Activated naive CD8-positive, alpha-beta T cell treated with anti-CD3 and anti-CD28 coated beads, Interleukin-2, amount 10 ng/mL, durations not matched to agents 7 days and 5 days (primary cell): ENCODE measurements at regions of chr20 and their contacts with region 1.

Region 1: DNA sequence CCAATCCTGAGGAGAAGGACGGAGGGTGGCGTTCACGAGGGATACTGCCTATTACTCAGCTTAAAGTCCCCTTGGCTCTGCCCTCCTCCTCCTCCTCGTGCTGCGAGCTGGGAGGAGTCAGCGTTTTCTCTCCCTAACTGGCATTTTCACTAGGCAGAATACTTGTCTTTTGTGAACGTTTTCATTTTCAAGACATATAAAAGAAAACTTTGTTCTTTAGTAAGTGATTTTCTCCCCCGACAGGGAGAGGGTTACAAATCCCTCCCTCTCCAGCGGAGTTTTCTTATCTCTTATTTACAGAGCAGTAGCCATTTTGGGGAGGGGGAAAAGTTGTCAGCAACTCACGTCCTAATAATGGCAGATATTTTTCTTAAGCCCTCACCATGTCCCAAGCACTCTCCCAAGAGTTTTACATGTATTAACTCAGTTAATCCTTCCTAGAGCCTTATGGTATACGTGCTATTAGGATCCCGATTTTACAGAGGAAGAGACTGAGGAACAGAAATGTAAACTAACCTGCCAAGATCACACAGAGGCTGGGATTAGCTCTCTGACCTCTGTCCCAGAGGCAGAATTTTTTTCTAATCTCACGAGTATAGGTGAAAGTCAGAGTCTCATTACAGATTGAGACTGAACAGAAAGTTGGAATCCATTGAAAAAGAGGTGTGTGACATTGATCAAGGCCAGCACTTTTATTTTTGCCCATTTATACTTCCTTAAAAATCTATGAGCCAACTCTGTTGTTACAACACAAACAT is 30.0 kb upstream of the ZNF217 start:
- DNase-seq: no peak
- ATAC-seq: peak; percentile 55
- H3K4me3 Mint-ChIP-seq: peak overlapping the region; percentile 80
- H3K27ac Mint-ChIP-seq: peak overlapping the region; percentile 98
- H3K4me1 Mint-ChIP-seq: peaks cover 41% of the 10 kb centered on the region
- H3K27me3 Mint-ChIP-seq: no peaks in the 10 kb centered on the region

Region 2: DNA sequence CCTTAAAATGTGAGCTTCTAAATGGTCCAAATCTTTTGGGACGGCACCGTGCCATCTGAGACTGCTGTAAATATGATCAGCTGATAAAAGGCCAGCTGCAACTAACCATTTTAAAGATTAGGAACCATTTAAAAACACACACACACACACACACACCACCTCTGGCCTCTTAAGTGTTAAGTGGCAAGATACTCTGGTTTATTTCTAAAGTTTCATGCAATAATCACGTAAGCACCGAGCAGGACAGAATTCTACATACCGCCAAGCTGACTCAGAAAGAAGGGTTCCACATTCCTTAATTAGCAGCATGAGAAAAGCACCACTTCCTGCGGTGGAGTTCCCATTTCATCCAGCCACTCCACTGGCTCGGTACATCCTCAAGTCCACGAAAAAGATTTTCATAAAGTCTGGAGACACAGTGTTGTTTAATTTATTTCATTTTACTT is 12.2 kb before region 1 on chr20:
- POLR2A ChIA-PET with region 1: interaction called, 35 read pairs
- DNase-seq: no peak
- ATAC-seq: no peak
- H3K4me3 Mint-ChIP-seq: no peak overlapping the region
- H3K27ac Mint-ChIP-seq: no peak overlapping the region
- H3K4me1 Mint-ChIP-seq: peaks cover 30% of the 10 kb centered on the region
- H3K27me3 Mint-ChIP-seq: no peaks in the 10 kb centered on the region

Region 3: DNA sequence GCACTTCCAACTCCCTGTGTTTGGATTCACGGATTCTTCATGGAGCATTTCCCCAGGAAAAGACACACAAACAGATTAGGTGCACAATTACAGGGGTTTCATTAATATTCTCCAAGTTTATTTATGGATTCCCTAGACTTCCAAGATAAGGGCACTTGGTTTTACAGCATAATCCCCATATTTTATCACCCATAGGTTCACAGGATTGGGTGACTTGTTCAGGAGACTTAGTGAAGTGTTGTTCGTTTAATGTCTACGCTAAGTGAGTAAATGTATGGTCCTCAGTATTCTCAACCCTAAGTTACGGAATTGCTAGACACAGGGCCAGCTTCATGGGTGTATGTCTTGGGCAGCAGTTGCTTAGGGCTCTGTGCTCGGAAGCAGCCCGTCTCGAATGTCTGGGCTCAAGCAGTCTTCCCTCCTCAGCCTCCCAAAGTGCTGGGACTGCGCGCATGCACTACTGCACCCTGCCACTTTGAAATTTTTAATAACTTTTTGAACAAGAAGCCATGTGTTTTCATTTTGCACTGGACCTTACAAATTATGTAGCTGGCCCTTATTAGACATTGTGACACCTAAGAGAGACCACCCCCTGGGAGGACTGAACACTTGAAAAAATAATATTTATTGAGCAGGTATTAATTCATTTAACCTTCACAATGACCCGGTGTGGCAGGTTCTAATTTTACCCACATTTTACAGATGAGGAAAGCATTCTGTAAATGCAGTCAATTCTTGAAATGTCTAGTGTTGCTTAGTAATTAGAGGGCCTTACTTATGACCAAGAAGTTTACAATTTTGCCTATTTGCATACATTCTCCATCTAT is 61.6 kb after region 1 on chr20:
- POLR2A ChIA-PET with region 1: interaction called, 15 read pairs
- DNase-seq: no peak
- ATAC-seq: no peak
- H3K4me3 Mint-ChIP-seq: peak overlapping the region; percentile 70
- H3K27ac Mint-ChIP-seq: peak overlapping the region; percentile 96
- H3K4me1 Mint-ChIP-seq: peaks cover 33% of the 10 kb centered on the region
- H3K27me3 Mint-ChIP-seq: no peaks in the 10 kb centered on the region